ENCODE measurements at regions of chr3 and their contacts with region 1.

Region 1: DNA sequence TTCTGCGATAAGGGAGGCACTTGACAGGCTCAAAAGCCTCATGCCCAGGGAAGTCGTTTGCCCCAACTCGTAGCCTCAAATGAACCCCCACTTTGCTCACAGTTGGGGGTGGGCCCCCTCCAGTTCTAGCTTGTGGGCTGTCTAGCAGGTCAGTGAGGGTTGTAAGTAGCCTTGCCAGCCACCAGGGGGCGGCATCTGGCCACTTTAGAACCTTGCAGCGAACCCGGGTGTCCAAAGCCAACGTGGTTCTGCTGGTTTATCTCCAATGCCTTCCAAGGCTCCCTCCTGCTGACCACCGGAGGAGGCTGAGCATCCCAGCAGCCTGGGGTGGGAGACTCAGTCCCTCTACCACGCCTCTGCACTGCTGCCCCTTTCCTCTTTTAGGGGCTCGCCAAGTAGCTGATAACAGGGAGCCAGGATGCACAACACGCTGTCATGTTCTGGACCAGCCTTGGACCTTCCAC is 9.2 kb upstream of the RBSN start:
- DNase-seq: peak; percentile 78
- H3K4me3 ChIP-seq: no peak overlapping the region
- H3K27ac ChIP-seq: no peak overlapping the region
- H3K4me1 ChIP-seq: peaks cover 1 to 8% (median 2%) of the 10 kb centered on the region in 4 donors
- H3K27me3 ChIP-seq: no peaks in the 10 kb centered on the region
- CTCF ChIP-seq: peak; percentile 78 to 93 (median 89)
- EP300 ChIP-seq: no peak
- POLR2A ChIP-seq: no peak

Region 2: GRCh38 chr3:15180042-15180611 is 72.0 kb after region 1 on chr3:
- in situ Hi-C with region 1: no loop called
- intact Hi-C with region 1: no loop called
- DNase-seq: no peak
- H3K4me3 ChIP-seq: no peak overlapping the region
- H3K27ac ChIP-seq: no peak overlapping the region
- H3K4me1 ChIP-seq: peaks cover 0 to 3% (median 0%) of the 10 kb centered on the region in 4 donors
- H3K27me3 ChIP-seq: no peaks in the 10 kb centered on the region
- CTCF ChIP-seq: no peak
- EP300 ChIP-seq: no peak
- POLR2A ChIP-seq: no peak

Region 3: DNA sequence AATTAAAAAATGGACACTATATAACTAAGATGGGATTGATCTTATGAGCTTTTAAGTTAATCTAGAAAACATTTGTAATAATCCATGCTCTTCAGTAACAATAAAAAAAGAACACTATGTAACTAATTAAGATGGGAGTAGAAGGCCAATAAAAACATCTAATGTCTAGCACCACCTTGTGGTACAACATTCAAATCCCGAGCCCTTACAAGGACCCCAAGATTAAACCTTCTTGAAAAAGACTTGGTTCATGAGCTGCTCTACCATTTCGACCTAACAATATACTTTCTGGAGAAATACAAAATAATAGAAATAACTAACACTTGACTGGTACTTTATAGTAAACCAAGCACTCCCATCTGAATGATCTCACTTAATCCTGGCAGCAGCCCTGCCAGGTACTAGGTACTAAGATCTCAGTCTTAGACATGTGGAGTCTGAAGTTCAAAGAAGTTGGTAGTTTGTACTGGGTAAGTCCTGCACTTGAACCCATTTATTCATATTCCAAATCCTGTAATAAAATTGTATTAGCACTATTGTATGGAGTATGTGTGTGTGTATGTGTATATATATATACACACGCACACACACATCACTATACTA is 297.4 kb after region 1 on chr3:
- in situ Hi-C with region 1: loop called in 2 of 4 experiments (anchors 25 kb)
- intact Hi-C with region 1: no loop called
- DNase-seq: no peak
- H3K4me3 ChIP-seq: no peak overlapping the region
- H3K27ac ChIP-seq: no peak overlapping the region
- H3K4me1 ChIP-seq: peaks cover 0 to 3% (median 0%) of the 10 kb centered on the region in 4 donors
- H3K27me3 ChIP-seq: no peaks in the 10 kb centered on the region
- CTCF ChIP-seq: peak; percentile 55 to 75 (median 63)
- EP300 ChIP-seq: no peak
- POLR2A ChIP-seq: no peak

Measured in transverse colon (tissue), 4 donors.